Vagina (tissue), 2 donors: ENCODE measurements at regions of chr11 and their contacts with region 1.

Region 1: GRCh38 chr11:6022956-6023355 is 7.6 kb downstream of the OR56A1 start:
- DNase-seq: no peak
- H3K4me3 ChIP-seq: no peak overlapping the region
- H3K27ac ChIP-seq: no peak overlapping the region
- H3K4me1 ChIP-seq: no peaks in the 10 kb centered on the region
- H3K27me3 ChIP-seq: no peaks in the 10 kb centered on the region
- CTCF ChIP-seq: peak in 2 of 3 experiments; percentile 15 to 43
- POLR2A ChIP-seq: no peak

Region 2: GRCh38 chr11:6362873-6363678 is 340.1 kb after region 1 on chr11:
- intact Hi-C with region 1: loop called (anchors 5 kb)
- DNase-seq: no peak
- H3K4me3 ChIP-seq: no peak overlapping the region
- H3K27ac ChIP-seq: no peak overlapping the region
- H3K4me1 ChIP-seq: peaks cover under 1% of the 10 kb centered on the region
- H3K27me3 ChIP-seq: no peaks in the 10 kb centered on the region
- CTCF ChIP-seq: peak; percentile 47 to 72 (median 55)
- POLR2A ChIP-seq: no peak